ENCODE measurements at regions of chr1 and their contacts with region 1.

Region 1: DNA sequence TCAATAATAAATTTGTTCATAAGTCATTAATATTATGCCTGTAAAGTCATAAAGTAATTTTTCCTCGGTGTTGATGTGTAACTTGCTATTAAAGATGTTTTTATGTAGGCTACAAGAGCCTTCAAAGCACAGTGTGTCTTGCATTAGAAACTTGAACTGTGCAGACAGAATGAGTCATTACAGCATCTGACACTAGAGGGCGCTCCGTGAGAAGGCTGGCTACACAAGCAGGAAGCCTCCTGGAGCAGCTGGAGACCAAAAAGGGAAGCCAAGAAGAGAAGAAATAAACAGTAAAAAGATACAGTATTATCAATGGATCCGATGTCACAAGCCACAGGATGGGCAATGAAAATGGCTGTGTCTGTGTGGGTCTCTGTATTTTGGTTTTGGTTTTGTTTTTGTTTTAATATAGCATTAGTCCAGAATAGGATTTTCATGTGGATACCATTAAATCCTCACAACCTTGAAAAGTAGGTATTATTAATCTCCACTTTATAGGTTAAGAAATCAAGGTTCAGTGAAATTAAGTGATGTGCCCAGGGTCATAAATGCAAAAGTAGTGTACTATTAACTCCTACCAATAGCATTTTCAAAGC is 16.1 kb upstream of the LRRC8D start:
- DNase-seq: peak; percentile 76 to 81
- H3K4me3 ChIP-seq: no peak overlapping the region
- H3K27ac ChIP-seq: no peak overlapping the region
- H3K4me1 ChIP-seq: peaks cover 36% of the 10 kb centered on the region
- H3K27me3 ChIP-seq: no peaks in the 10 kb centered on the region
- CTCF ChIP-seq: peak; percentile 100

Region 2: GRCh38 chr1:89820422-89821321 is 15.9 kb after region 1 on chr1 and contains the start of gene LRRC8D:
- CTCF ChIA-PET with region 1: no interaction called
- POLR2A ChIA-PET with region 1: interaction called, 4 read pairs
- intact Hi-C with region 1: loop called (anchors 1 kb)
- DNase-seq: peak; percentile 82 to 86
- H3K4me3 ChIP-seq: peak within 1 kb of the TSS; percentile 75
- H3K27ac ChIP-seq: peak within 1 kb of the TSS; percentile 67
- H3K4me1 ChIP-seq: peaks cover 51% of the 10 kb centered on the region
- H3K27me3 ChIP-seq: no peaks in the 10 kb centered on the region
- CTCF ChIP-seq: no peak
- total RNA-seq, gene LRRC8D: 71.9 and 75.9 TPM in 2 replicates

Region 3: GRCh38 chr1:89843281-89844121 is 38.8 kb after region 1 on chr1:
- CTCF ChIA-PET with region 1: no interaction called
- POLR2A ChIA-PET with region 1: no interaction called
- intact Hi-C with region 1: loop called (anchors 1 kb)
- DNase-seq: peak; percentile 45 to 67
- H3K4me3 ChIP-seq: peak overlapping the region; percentile 78
- H3K27ac ChIP-seq: peak overlapping the region; percentile 60
- H3K4me1 ChIP-seq: peaks cover 45% of the 10 kb centered on the region
- H3K27me3 ChIP-seq: no peaks in the 10 kb centered on the region
- CTCF ChIP-seq: peak; percentile 68

Region 4: GRCh38 chr1:89873770-89874169 is 69.0 kb after region 1 on chr1:
- CTCF ChIA-PET with region 1: no interaction called
- POLR2A ChIA-PET with region 1: no interaction called
- intact Hi-C with region 1: loop called (anchors 1 kb)
- DNase-seq: peak in 1 of 2 experiments; percentile 79
- H3K4me3 ChIP-seq: no peak overlapping the region
- H3K27ac ChIP-seq: peak overlapping the region; percentile 3; the same call in 1 of the 2 replicates
- H3K4me1 ChIP-seq: peaks cover 16% of the 10 kb centered on the region
- H3K27me3 ChIP-seq: no peaks in the 10 kb centered on the region
- CTCF ChIP-seq: no peak

Region 5: GRCh38 chr1:89908672-89909436 is 104.1 kb after region 1 on chr1:
- CTCF ChIA-PET with region 1: no interaction called
- POLR2A ChIA-PET with region 1: interaction called, 4 read pairs
- intact Hi-C with region 1: loop called (anchors 1 kb)
- DNase-seq: peak in 1 of 2 experiments; percentile 95
- H3K4me3 ChIP-seq: peak overlapping the region; percentile 7; the same call in 1 of the 2 replicates
- H3K27ac ChIP-seq: peak overlapping the region; percentile 92
- H3K4me1 ChIP-seq: peaks cover 91% of the 10 kb centered on the region
- H3K27me3 ChIP-seq: no peaks in the 10 kb centered on the region
- CTCF ChIP-seq: no peak

Region 6: DNA sequence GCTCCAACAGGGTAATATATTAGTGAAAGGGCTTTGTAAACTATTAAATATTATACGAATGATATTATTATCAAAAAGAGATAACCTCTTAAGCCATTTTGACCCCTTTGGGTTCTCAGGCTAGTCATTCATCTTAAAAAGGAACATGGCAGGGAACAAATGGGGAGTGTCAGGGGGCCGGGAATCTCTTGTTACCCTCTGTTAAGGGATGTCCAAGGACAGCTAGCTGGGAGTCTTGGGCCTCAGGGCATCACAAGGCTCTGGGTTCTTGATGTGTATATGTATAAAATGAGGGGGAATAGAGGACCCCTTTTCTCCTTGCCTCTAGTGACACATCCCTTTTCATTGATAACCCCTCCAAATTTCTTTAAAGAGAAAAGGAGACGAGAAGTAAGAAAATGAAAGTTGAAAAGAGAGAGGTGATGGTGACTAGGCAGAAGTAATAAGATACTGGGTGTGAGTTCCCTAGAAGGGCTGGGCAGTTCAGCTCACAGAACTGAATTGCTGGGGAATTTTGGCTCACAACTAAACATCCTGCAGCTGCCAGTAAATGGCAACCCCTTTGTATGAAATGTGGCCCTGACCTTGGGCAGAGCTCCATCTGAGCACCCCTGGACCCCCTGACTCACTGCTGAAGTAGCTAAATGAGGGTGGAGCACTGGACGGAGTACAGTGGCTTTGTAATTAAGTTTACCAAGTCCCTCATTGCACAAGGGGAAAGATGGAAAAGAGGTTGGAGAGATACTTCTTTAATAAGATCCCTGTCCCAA is 170.1 kb after region 1 on chr1:
- CTCF ChIA-PET with region 1: no interaction called
- POLR2A ChIA-PET with region 1: interaction called, 3 read pairs
- intact Hi-C with region 1: loop called (anchors 5 kb)
- DNase-seq: peak; percentile 85 to 99
- H3K4me3 ChIP-seq: peak overlapping the region; percentile 48
- H3K27ac ChIP-seq: peak overlapping the region; percentile 99
- H3K4me1 ChIP-seq: peaks cover 67% of the 10 kb centered on the region
- H3K27me3 ChIP-seq: no peaks in the 10 kb centered on the region
- CTCF ChIP-seq: 0 out of 2 replicates have a peak, but pooled peaks have one; percentile 21

Region 7: DNA sequence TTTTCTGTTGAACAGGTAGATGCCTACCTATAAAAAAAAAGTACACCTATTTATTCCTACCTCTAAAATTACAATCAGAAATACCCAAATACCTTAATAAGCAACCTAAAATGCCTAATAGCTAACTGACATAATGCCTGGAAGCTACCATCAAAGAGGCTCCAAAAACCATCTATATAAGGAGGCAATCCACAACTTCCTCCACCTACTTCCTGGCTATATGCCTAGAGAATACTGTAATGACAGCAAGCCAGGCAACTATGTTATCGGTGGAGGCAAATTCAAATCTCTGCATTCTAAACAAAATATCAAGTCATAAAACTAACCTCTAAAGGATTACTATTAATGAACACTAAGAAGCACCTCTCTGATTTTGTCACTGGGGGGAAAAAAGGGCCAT is 1207.0 kb after region 1 on chr1:
- CTCF ChIA-PET with region 1: no interaction called
- POLR2A ChIA-PET with region 1: no interaction called
- intact Hi-C with region 1: no loop called
- DNase-seq: peak in 1 of 2 experiments; percentile 38
- H3K4me3 ChIP-seq: no peak overlapping the region
- H3K27ac ChIP-seq: no peak overlapping the region
- H3K4me1 ChIP-seq: peaks cover 14% of the 10 kb centered on the region
- H3K27me3 ChIP-seq: no peaks in the 10 kb centered on the region
- CTCF ChIP-seq: no peak

Measured in PC-9 (cell line).